HEK293 (cell line): ENCODE measurements at regions of chr18 and their contacts with region 1.

Region 1: DNA sequence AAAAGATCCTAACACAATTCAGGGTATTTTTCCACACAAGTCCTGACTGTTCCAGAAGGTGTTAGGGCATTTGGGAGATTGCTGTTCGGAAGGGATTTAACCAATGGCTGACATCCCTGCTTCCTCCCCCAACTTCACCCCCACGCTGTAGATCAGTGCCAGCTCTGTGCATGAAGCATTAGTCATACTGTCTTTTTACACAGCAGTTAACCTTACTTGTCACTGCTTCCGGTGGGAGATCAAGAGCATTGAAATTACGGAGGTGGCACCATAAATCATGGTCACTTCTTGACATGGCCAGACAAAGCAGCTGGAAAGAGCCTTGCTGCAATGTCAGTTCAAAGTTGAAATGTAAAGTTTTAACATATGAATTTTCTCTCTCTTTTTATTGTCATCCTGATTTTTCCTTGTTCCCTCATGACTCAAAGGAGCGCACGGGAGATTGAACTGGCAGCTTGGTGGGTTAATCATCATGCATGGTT is 70.2 kb downstream of the HRH4 start:
- H3K4me3 ChIP-seq: no peak overlapping the region
- H3K27ac ChIP-seq: no peak overlapping the region
- H3K4me1 ChIP-seq: peaks cover 6% of the 10 kb centered on the region
- CTCF ChIP-seq: no peak

Region 2: GRCh38 chr18:24456549-24456948 is 74.1 kb before region 1 on chr18:
- CTCF ChIA-PET with region 1: no interaction called
- POLR2A ChIA-PET with region 1: no interaction called
- H3K4me3 ChIP-seq: no peak overlapping the region
- H3K27ac ChIP-seq: no peak overlapping the region
- H3K4me1 ChIP-seq: no peaks in the 10 kb centered on the region
- CTCF ChIP-seq: no peak

Region 3: DNA sequence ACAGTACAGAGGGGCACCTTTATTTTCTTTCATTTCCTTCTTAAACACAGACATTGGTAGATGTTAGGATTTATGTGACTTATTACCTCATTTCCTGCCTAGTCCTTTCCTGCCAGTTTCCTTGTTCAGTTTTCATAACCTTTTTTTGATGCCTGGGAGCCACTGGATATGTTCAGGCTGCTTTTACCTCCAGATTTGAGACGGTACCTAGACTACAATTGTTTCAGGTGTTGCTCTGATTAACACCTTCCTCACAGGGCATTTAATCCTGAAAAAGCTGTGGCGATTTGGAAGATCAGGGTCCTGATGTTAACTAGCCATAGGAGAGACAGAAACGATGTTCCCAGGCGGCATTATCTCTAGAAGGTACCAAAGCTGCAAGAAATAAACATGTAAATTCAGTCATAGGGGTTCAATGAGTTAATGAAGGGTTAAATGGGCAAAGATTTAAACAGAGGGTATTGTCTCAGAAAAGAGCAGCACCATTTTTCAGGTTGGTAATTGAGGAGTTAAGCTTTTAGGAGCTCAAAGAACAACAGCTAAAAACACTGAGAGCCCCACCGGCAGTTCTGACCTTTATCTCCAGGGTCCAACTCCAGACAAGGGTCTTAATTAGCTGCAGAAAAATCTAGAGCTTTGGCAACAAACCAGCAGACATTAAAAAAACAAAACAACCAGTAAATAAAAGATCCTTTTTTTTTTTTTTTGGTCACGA is 23.1 kb after region 1 on chr18:
- CTCF ChIA-PET with region 1: no interaction called
- POLR2A ChIA-PET with region 1: no interaction called
- H3K4me3 ChIP-seq: no peak overlapping the region
- H3K27ac ChIP-seq: no peak overlapping the region
- H3K4me1 ChIP-seq: no peaks in the 10 kb centered on the region
- CTCF ChIP-seq: no peak

Region 4: DNA sequence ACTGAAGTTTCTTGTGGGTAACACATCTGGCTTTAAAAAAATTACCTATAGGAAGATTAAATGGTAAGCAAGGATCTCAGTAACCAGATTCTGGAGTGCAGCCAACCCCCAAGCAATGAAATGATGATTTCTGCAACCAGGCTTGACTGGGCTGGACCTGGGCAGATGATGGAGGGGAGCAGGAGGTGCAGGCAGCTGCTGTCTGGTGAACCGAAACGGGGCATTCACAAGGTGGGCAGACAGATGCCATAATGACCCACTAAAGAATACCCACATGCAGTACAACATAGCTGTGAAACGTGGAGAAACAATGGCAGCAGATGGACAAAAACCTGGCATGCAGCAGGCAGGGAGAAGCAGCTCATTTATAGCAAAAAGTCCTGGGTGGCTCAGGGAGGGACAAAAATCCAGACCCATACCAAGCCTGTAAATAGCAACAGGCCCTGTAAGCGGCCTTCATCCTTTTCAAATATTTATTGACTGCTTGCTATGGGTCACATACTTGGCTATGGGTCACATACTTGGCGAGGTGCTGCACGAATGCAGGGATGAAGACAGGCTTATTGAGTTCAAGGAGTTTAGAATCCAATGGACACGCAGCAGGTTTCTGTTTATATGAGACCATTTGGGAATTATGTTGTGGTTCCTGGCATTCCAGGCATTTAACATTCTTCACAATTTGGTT is 174.4 kb after region 1 on chr18:
- CTCF ChIA-PET with region 1: no interaction called
- POLR2A ChIA-PET with region 1: interaction called, 10 read pairs
- H3K4me3 ChIP-seq: no peak overlapping the region
- H3K27ac ChIP-seq: no peak overlapping the region
- H3K4me1 ChIP-seq: no peaks in the 10 kb centered on the region
- CTCF ChIP-seq: no peak

Region 5: GRCh38 chr18:24770311-24771024 is 239.8 kb after region 1 on chr18:
- CTCF ChIA-PET with region 1: no interaction called
- POLR2A ChIA-PET with region 1: no interaction called
- H3K4me3 ChIP-seq: no peak overlapping the region
- H3K27ac ChIP-seq: no peak overlapping the region
- H3K4me1 ChIP-seq: no peaks in the 10 kb centered on the region
- CTCF ChIP-seq: no peak

Region 6: DNA sequence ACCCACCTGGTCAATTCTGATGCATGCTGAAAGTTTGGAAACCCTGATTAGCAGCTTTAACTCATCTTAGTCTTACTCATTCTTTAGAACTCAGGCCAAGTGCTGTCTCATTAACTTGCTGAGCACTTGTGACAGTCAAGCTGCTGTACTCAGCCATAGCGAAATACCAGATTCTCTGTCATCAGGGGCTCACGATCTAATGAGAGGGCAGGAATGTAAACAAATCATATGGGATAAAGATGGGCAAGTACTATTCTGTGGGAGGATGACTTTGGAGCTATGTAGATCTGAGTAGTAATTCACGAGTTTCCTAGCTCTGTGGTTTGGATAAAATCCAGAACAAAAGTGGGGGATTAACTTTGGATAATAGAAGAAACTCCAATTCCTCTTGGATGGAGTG is 306.4 kb after region 1 on chr18:
- CTCF ChIA-PET with region 1: no interaction called
- POLR2A ChIA-PET with region 1: no interaction called
- H3K4me3 ChIP-seq: no peak overlapping the region
- H3K27ac ChIP-seq: no peak overlapping the region; the same call in 1 of the 2 replicates
- H3K4me1 ChIP-seq: no peaks in the 10 kb centered on the region; the same call in 1 of the 2 replicates
- CTCF ChIP-seq: no peak